Naive thymus-derived CD8-positive, alpha-beta T cell (primary cell): ENCODE measurements at regions of chr7 and their contacts with region 1.

Region 1: GRCh38 chr7:38318803-38319416 is 45.5 kb upstream of the TARP start:
- DNase-seq: no peak
- ATAC-seq: peak; percentile 41 to 50
- H3K4me3 Mint-ChIP-seq: peak overlapping the region; percentile 41 to 88 (median 70)
- H3K27ac Mint-ChIP-seq: peak overlapping the region; percentile 60 to 97 (median 86)
- H3K4me1 Mint-ChIP-seq: peaks cover 7 to 59% (median 33%) of the 10 kb centered on the region in 4 donors
- H3K27me3 Mint-ChIP-seq: no peaks in the 10 kb centered on the region

Region 2: DNA sequence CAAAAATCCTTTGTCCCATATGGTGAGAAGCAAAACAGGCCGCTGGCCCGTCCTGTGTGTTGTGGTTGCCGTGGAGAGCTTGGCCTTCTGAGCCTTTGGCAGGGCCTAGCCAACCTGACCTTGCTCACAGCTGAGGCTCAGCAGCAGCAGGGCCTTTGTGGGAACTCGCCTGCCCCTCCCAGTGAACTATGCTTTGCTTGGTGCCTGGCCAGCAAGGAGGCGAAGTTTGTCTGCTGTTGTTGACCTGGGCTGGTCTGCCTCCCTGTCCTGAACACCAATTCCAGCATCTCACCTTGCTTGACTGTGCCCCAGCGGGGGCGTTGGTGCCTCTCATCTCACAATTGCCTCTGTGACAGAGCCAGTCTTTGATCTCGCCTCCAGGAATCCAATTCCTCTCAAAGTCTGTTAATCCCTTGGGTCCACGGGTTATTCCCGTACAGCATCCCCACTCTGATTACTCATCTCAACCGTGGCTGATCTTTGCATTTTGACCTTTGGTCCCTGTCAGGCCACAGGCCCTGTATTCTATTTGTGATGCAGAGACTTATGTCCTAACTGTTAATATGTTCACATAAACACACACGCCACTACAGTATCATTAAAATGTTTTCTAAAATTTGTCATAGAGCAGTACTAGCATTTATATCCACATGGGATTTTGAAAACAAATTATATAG is 375.8 kb before region 1 on chr7:
- POLR2A ChIA-PET with region 1: no interaction called
- DNase-seq: no peak
- ATAC-seq: no peak
- H3K4me3 Mint-ChIP-seq: no peak overlapping the region
- H3K27ac Mint-ChIP-seq: no peak overlapping the region
- H3K4me1 Mint-ChIP-seq: no peaks in the 10 kb centered on the region
- H3K27me3 Mint-ChIP-seq: no peaks in the 10 kb centered on the region

Region 3: DNA sequence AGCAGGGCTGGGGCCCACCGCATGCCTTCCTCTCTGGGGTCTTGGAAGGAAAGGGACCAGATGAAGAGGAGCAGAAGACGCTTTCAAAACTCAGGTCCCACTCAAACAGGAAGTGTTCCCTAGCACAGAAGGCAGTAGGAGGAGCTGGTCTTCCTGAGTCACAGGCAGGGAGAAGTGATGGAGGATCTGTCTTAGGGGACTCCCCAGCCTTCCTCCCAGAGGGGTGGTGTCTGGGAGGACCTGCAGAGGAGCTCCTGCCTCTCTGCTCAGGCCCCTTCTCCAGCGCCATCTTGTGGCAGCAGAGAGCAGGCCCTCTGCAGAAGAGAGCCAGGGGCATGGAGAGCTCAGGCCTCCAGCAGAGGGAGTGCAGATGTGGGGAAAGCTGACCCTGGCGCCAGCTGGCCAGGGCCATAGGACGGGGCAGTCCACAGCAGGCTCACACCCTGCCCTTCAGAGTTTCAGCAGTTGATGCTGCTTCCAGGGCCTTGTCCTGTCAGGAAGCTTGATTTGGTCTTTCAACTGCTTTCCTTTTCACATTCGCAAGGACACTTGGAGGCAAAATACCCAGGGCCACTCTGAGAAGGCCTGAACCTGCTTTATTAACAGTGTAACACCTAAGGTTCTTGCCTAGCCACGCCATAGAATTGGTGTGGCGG is 16.7 kb after region 1 on chr7:
- POLR2A ChIA-PET with region 1: interaction called, 14 read pairs
- DNase-seq: peak; percentile 66 to 86 (median 74)
- ATAC-seq: peak; percentile 85 to 87
- H3K4me3 Mint-ChIP-seq: peak overlapping the region; percentile 68 to 91 (median 77)
- H3K27ac Mint-ChIP-seq: peak overlapping the region; percentile 43 to 93 (median 88)
- H3K4me1 Mint-ChIP-seq: peaks cover 14 to 65% (median 49%) of the 10 kb centered on the region in 4 donors
- H3K27me3 Mint-ChIP-seq: no peaks in the 10 kb centered on the region

Region 4: DNA sequence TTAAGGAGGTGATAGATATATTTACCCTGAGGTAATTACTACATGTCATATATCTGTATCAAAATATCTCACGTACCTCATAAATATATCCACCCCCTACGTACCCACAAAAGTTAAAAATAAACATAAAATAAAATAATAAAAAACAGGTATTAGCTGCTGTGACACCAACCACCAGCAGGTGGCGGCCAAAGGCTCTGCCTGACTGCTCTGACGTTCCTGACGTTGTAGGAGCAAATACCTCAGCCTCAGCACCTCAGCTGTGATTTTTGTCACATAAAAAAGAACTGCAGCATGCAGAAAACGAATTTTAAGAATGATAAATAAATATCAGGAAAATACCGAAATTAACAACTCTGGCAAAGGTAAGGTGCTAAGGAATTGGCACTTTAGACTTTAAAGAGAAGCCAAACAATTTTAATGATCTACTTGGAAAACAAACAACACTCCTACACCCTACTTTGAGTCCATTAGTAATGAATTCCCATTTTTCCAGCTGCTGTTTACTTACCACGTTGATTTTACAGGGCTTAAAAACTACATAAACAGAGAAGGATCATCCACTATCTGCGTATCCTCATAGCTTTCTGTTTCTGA is 79.9 kb after region 1 on chr7:
- POLR2A ChIA-PET with region 1: no interaction called
- DNase-seq: peak; percentile 11 to 70 (median 46)
- ATAC-seq: peak; percentile 56 to 65
- H3K4me3 Mint-ChIP-seq: no peak overlapping the region
- H3K27ac Mint-ChIP-seq: no peak overlapping the region
- H3K4me1 Mint-ChIP-seq: peaks cover 0 to 14% (median 8%) of the 10 kb centered on the region in 4 donors
- H3K27me3 Mint-ChIP-seq: peaks cover 1 to 20% (median 3%) of the 10 kb centered on the region in 5 donors